ENCODE measurements at regions of chr4 and their contacts with region 1.

Region 1: DNA sequence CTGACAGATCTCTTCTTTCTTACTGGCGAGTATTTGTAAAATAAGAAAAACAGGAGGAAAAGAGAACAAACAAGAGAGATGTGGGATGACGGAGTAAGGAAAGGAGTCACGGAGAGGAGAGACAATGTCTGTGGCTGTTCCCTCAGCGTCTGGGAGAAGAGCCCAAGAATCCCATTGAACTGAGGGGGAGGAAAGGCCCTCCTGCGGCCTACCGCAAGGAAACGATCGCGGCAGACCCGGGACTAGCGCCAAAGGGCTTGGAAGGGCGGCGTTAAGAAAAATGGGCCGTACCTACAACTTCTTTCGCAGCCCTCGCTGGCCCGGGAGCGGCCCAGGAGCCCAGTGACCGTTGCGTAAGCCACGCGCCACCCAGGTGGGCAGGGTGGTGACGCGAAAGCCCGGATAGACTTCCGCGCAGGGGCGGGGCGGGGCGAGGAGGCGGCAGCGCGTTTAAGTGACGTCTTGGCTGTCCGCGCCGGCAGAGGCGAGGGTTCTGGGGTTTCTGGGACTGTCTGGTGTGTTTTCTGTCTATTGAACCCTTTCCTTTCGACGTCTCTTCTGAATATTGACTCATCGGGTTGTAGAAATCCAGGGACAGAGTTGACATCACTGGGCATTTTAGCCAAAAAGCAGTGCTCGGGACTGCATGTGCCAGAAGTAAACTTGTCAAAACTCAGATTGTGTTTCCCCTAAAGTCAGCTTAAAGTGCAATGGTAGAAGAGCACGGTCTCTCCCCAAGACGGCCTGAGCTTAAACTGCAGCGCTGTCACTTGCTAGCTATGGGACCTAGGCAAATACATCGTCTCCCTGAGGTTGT is at the start of gene SLC9B1:
- DNase-seq: peak; percentile 93
- H3K4me3 Mint-ChIP-seq: peak within 1 kb of the TSS; percentile 90
- H3K27ac Mint-ChIP-seq: peak within 1 kb of the TSS; percentile 96
- H3K4me1 Mint-ChIP-seq: peaks cover 25% of the 10 kb centered on the region
- H3K27me3 Mint-ChIP-seq: no peaks in the 10 kb centered on the region
- total RNA-seq, gene SLC9B1: 0.51 and 0.52 TPM in 2 replicates

Region 2: GRCh38 chr4:102578819-102579218 is 440.7 kb before region 1 on chr4:
- intact Hi-C with region 1: loop called (anchors 5 kb)
- DNase-seq: no peak
- H3K4me3 Mint-ChIP-seq: no peak overlapping the region
- H3K27ac Mint-ChIP-seq: peak overlapping the region; percentile 40
- H3K4me1 Mint-ChIP-seq: peaks cover 80% of the 10 kb centered on the region
- H3K27me3 Mint-ChIP-seq: no peaks in the 10 kb centered on the region

Region 3: GRCh38 chr4:102789317-102789717 is 230.2 kb before region 1 on chr4:
- intact Hi-C with region 1: loop called (anchors 1 kb)
- DNase-seq: no peak
- H3K4me3 Mint-ChIP-seq: no peak overlapping the region
- H3K27ac Mint-ChIP-seq: peak overlapping the region; percentile 52
- H3K4me1 Mint-ChIP-seq: peaks cover 38% of the 10 kb centered on the region
- H3K27me3 Mint-ChIP-seq: no peaks in the 10 kb centered on the region

Region 4: GRCh38 chr4:102868781-102869568 is 150.5 kb before region 1 on chr4 and contains the start of gene CISD2:
- intact Hi-C with region 1: loop called (anchors 1 kb)
- DNase-seq: peak; percentile 91
- H3K4me3 Mint-ChIP-seq: peak within 1 kb of the TSS; percentile 93
- H3K27ac Mint-ChIP-seq: peak within 1 kb of the TSS; percentile 99
- H3K4me1 Mint-ChIP-seq: peaks cover 69% of the 10 kb centered on the region
- H3K27me3 Mint-ChIP-seq: no peaks in the 10 kb centered on the region
- total RNA-seq, gene CISD2: 41.2 and 50.7 TPM in 2 replicates